PC-9 (cell line): ENCODE measurements at regions of chr6 and their contacts with region 1.

Region 1: GRCh38 chr6:123393328-123393727 is 243.4 kb downstream of the TRDN start:
- DNase-seq: no peak
- H3K4me3 ChIP-seq: no peak overlapping the region
- H3K27ac ChIP-seq: no peak overlapping the region
- H3K4me1 ChIP-seq: no peaks in the 10 kb centered on the region
- H3K27me3 ChIP-seq: no peaks in the 10 kb centered on the region
- CTCF ChIP-seq: peak; percentile 70

Region 2: DNA sequence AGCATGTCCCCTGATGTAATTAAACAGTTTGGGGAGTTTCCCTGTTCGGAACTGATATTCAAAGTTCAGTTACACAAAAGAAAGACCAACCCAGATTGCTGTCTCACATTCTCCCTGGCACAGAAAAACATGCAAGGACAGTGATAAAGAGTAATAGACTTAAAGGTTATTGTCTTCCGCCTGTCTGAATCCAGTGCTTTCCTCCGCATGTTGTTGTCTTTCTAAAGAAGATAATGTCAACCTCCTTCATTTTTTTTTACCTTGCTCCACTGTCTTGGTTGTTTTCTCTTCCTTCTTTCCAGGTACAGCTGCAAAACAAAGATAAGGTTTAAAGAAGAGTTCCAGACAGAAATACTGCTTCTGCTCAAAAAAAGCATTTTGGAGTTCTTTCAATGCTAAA is 41.0 kb before region 1 on chr6:
- CTCF ChIA-PET with region 1: no interaction called
- POLR2A ChIA-PET with region 1: no interaction called
- intact Hi-C with region 1: no loop called
- DNase-seq: no peak
- H3K4me3 ChIP-seq: no peak overlapping the region
- H3K27ac ChIP-seq: no peak overlapping the region
- H3K4me1 ChIP-seq: no peaks in the 10 kb centered on the region
- H3K27me3 ChIP-seq: no peaks in the 10 kb centered on the region
- CTCF ChIP-seq: no peak

Region 3: DNA sequence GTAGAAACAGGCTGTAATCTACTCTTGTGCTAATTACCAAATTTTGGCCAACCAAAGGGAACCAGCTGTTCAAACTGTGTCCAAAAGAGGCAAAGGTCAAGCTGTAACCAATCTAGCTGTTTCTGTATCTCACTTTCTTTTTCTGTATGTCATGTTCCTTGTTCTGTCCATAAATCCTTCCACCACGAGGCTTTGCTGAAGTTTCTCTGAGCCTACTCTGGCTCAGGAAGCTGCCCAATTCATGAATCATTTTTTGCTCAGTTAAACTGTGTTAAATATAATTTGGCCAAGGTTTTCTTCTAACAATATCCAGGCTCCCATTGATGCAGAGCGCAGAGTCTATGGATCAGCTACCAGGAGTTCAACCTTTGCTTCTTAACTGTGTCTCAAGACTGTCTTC is 29.4 kb before region 1 on chr6:
- CTCF ChIA-PET with region 1: no interaction called
- POLR2A ChIA-PET with region 1: no interaction called
- intact Hi-C with region 1: no loop called
- DNase-seq: no peak
- H3K4me3 ChIP-seq: no peak overlapping the region
- H3K27ac ChIP-seq: no peak overlapping the region
- H3K4me1 ChIP-seq: no peaks in the 10 kb centered on the region
- H3K27me3 ChIP-seq: no peaks in the 10 kb centered on the region; the same call in 1 of the 2 replicates
- CTCF ChIP-seq: no peak

Region 4: DNA sequence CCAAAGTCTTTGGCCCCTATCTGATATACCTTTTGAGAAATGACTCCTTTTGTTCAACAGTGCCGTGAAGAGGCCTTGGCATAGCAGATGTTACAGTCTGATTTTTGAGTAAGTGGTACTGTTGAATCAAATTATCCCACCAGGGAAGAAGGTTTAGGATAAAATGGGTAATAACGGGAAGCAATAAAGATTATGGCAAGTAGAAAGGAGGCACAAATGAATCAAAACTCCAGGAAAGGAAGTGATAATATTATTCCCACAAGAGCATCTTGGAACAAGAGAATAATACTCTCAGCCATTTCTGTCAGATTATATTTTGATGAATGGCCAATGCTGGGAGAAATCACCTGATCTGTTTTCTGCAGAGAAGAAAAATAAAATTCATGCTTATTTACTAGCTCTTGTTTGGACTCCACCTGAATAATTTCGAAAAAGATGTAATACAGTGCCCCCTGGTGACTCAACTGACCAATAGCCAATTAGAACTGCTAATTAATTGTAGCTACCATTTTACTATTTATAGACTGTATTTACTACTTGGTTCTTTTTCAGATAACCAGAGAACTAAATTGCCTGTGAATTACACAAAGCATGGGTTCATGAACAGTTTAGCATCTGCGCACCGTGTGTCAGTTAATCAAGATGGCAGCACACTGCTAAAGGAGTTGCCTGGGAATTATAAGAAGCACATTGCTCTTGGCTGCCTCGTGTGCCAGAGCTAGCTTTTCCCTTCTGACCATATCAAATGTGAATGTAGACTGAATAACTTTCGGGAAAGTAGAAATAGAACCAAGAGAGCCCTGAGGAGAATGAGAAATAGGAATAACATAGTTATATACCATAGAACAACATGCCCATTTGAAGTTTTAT is 321.9 kb after region 1 on chr6:
- CTCF ChIA-PET with region 1: interaction called, 5 read pairs
- POLR2A ChIA-PET with region 1: no interaction called
- intact Hi-C with region 1: loop called (anchors 1 kb)
- DNase-seq: peak; percentile 9 to 38
- H3K4me3 ChIP-seq: no peak overlapping the region
- H3K27ac ChIP-seq: no peak overlapping the region
- H3K4me1 ChIP-seq: no peaks in the 10 kb centered on the region
- H3K27me3 ChIP-seq: no peaks in the 10 kb centered on the region
- CTCF ChIP-seq: peak; percentile 84

Region 5: GRCh38 chr6:123777563-123777962 is 384.2 kb after region 1 on chr6:
- CTCF ChIA-PET with region 1: no interaction called
- POLR2A ChIA-PET with region 1: no interaction called
- intact Hi-C with region 1: no loop called
- DNase-seq: no peak
- H3K4me3 ChIP-seq: no peak overlapping the region
- H3K27ac ChIP-seq: no peak overlapping the region
- H3K4me1 ChIP-seq: no peaks in the 10 kb centered on the region
- H3K27me3 ChIP-seq: no peaks in the 10 kb centered on the region
- CTCF ChIP-seq: peak; percentile 48; the same call in 1 of the 2 replicates

Region 6: DNA sequence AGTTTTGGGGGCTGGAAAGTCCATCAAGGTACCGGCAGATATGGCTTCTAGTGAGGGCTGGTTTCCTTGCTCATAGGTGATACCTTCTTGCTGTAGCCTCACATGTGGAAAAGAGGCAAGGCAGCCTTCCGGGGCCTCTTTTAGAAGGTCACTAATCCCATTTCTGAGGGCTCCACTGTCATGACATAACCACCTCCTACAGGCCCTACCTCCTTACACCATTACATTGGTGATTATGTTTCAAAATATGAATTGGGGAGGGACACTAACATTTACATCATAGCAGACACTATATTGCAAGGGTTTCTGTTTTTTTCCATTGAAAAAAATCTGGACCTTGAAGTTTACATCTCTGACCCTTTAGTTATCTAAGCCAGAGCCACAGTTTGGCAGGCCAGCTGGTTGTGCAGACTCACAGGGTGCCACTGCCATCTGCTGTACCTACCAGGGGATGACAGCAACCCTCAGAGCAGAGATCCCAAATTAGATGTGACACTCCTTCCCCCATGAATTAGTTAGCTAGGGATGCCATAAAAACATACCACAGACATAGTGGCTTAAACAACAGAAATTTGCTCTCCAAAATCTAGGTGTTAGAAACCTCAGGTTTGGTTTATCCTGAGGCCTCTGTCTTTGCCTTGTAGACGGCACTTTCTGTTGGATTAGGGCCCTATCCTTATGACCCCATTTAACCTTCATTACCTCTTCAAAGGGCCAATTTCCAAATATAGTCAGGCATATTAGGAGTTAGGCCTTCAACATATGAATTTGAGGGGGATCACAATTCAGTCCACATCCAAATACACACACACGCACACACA is 1402.5 kb after region 1 on chr6:
- CTCF ChIA-PET with region 1: interaction called, 3 read pairs
- POLR2A ChIA-PET with region 1: no interaction called
- intact Hi-C with region 1: loop called (anchors 5 kb)
- DNase-seq: peak in 1 of 2 experiments; percentile 10
- H3K4me3 ChIP-seq: no peak overlapping the region
- H3K27ac ChIP-seq: no peak overlapping the region
- H3K4me1 ChIP-seq: no peaks in the 10 kb centered on the region
- H3K27me3 ChIP-seq: no peaks in the 10 kb centered on the region
- CTCF ChIP-seq: peak; percentile 74

Region 7: DNA sequence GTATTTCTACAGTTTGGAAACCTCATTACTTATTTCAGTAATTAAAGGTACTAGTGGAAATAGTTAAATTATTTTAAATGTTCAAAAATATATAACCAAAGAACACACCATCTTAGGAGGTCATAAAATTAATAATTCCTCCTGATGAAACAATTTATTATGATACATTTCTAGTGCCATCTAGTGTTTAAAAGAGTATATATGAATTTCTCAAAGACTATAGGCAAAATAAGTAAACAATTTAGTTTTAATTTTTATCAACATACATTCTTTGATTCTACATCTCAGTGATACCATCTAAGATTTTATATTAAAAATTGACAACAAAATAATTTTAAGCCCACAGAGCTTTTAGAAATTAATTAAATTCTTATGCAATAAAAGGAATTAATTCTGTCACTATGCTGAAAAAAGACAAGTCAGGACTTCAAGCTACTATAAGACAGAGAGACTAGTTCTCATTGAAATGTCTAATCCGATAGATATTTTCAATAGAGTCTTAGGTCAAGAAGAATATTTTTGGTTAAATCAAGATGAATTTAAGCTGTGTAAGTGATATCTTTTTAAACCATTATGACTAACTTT is 1461.1 kb after region 1 on chr6:
- CTCF ChIA-PET with region 1: no interaction called
- POLR2A ChIA-PET with region 1: no interaction called
- intact Hi-C with region 1: loop called (anchors 5 kb)
- DNase-seq: no peak
- H3K4me3 ChIP-seq: no peak overlapping the region
- H3K27ac ChIP-seq: no peak overlapping the region
- H3K4me1 ChIP-seq: no peaks in the 10 kb centered on the region
- H3K27me3 ChIP-seq: no peaks in the 10 kb centered on the region
- CTCF ChIP-seq: peak; percentile 76